ENCODE measurements at regions of chr5 and their contacts with region 1.

Region 1: DNA sequence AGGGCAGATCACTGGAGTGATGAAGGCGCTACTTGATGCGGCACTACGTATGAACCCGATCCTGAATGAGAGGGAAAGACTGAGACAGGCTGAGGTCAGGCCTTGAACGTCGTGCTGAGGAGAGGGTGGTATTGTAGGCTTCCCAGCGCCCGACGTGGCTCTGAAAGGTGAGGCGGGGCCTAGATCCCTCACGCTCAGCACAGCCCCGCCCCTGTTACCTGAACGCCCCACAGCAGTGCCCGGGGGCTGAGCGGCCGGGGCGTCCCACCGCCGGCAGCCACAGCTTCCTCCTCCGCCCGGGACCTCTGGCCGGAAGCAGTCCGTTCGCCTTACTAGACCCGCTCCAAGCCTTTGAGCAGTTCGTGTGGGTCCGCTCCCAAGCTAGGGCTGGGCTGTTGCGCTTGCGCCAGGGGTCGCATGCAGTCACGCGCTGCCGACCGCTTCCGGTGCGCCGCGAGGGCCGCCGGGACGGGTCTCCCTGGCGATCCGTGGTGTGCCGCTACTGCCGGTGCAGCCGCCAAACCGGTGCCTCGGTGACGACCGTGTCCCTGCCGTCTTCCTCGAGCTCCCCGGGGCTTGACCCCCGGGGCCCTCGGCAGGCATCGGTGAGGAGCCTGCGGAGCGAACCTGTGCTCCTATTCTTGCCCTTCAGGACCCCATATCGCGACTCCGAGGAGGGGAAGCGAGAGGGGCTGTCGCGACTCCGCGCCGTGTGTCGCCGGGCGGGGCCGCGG is at the starts of genes HMGXB3 and TIGD6:
- DNase-seq: peak; percentile 97
- H3K4me3 Mint-ChIP-seq: peak within 1 kb of the TSS; percentile 88
- H3K27ac Mint-ChIP-seq: peak within 1 kb of the TSS; percentile 98
- H3K4me1 Mint-ChIP-seq: peaks cover 38% of the 10 kb centered on the region
- H3K27me3 Mint-ChIP-seq: no peaks in the 10 kb centered on the region
- CTCF ChIP-seq: no peak
- total RNA-seq, gene HMGXB3: 55.9 and 58.2 TPM in 2 replicates
- total RNA-seq, gene TIGD6: 5.0 and 5.2 TPM in 2 replicates

Region 2: DNA sequence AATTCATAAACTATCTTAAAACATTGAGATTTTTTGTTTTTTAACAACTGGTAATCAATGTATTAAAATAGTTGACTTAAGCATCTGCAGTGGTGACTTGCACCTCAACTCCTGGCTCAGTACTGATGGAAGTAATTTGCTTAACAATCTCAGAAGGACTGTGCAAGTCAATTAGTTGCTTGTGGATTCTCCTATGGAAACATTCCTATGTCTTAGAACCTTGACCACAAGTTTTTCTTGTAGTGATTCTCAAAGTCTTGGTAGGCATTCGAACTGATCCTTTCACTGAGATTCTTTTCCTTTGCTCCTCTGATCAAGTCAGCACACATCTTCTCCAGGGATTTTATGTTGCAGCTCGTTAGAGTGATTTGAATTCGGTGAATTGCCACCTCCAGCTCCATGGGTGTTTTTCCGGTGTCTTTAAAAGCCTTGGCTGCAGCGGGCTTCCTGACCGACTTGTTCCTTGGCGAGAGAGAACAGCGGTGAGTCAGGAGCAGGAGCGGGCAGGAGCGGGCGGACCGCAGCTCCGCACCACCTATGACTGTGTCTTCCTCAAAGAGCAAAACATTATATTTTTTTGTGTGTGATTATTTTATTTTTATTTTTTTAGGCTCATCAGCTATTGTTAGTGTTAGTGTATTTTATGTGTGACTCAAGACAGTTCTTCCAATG is 21.2 kb after region 1 on chr5:
- CTCF ChIA-PET with region 1: interaction called, 7 read pairs
- intact Hi-C with region 1: loop called (anchors 2 kb)
- DNase-seq: peak; percentile 68
- H3K4me3 Mint-ChIP-seq: peak overlapping the region; percentile 66
- H3K27ac Mint-ChIP-seq: peak overlapping the region; percentile 91
- H3K4me1 Mint-ChIP-seq: peaks cover 58% of the 10 kb centered on the region
- H3K27me3 Mint-ChIP-seq: no peaks in the 10 kb centered on the region
- CTCF ChIP-seq: no peak